Left colon (tissue), 2 donors: ENCODE measurements at regions of chr14 and their contacts with region 1.

Region 1: GRCh38 chr14:56491299-56492285 is 88.0 kb upstream of the TMEM260 start:
- DNase-seq: peak in 1 of 2 donors; percentile 27
- ATAC-seq: peak; percentile 87

Region 2: DNA sequence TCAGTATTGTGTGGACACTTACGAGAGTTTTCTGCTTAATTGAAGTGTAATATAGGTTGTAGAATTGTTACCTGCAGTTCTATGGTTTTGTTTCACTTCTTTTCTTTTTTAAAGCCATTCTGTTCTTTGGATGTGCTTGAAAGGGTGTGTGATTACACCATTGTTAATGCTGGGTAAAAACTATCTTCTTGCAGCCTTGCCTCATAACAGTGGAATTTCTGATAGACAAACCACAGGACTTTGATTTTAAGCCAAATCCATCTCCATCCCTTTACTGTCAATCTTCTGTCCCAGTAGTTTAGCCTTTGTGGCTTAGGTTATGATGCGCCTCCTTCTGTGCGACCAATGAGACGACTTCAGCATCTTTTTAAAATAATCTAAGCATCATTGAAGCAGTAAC is 191.1 kb before region 1 on chr14:
- intact Hi-C with region 1: no loop called
- DNase-seq: no peak
- ATAC-seq: no peak

Region 3: GRCh38 chr14:56386024-56386423 is 105.6 kb before region 1 on chr14:
- intact Hi-C with region 1: no loop called
- DNase-seq: no peak
- ATAC-seq: no peak

Region 4: GRCh38 chr14:57317316-57317715 is 825.7 kb after region 1 on chr14:
- intact Hi-C with region 1: loop called in 1 of 2 experiments (anchors 5 kb)
- DNase-seq: peak; percentile 51 to 76
- ATAC-seq: peak; percentile 76